ENCODE measurements at regions of chr19 and their contacts with region 1.

Region 1: DNA sequence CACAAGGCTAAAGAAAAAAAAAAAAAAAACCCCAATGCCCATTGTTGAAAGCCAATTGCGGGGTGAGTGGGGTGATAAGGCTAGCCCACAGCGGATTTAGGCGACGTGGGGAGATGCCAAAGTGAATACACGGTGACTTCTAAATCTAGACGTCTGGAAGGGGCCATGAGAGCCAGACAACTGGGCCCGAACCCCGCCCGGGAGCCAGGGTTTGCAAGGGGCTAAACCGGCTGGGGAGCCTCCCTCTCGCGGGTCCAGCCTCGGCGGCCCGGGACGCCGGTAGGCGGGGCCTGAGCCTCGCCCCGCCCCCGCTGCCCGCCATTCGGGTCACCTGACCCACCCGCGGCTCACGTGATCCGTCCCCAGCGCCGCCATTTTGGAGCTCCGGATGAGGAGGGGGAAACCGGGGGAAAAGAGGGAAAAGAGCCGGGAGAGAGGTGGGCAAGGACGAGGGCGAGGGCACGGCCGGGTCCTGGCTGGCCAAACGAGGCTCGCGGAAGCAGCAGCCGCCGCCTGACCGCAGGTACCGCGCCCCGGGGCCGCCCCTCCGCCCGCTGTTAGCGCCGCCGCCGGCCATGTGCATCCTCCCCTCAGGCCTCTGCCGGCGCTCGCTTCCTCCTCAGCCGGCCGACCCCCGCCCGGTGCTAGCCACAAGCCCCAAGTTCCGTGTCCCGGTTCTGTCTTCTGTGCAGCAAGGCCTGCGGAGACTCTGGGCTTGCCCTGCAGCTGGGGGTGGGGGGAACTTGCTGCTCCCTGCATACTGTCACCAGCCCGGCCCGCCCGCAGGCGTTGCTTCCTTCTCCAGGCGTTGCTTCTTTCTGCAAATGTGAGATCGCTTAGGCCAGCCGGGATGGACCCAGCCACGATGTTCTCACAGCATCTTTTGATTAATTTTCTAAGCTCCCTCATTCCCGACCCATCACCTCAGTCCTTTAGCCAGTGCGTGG is at the start of gene ZNF507:
- DNase-seq: peak; percentile 91
- H3K4me3 ChIP-seq: peak within 1 kb of the TSS; percentile 72
- H3K27ac ChIP-seq: peak within 1 kb of the TSS; percentile 71
- H3K4me1 ChIP-seq: peaks cover 13% of the 10 kb centered on the region
- H3K27me3 ChIP-seq: no peaks in the 10 kb centered on the region
- CTCF ChIP-seq: no peak
- total RNA-seq, gene ZNF507: 35.0 and 36.1 TPM in 2 replicates

Region 2: GRCh38 chr19:32309711-32310390 is 35.7 kb before region 1 on chr19:
- CTCF ChIA-PET with region 1: no interaction called
- POLR2A ChIA-PET with region 1: no interaction called
- intact Hi-C with region 1: no loop called
- DNase-seq: no peak
- H3K4me3 ChIP-seq: no peak overlapping the region
- H3K27ac ChIP-seq: no peak overlapping the region
- H3K4me1 ChIP-seq: peaks cover 15% of the 10 kb centered on the region
- H3K27me3 ChIP-seq: no peaks in the 10 kb centered on the region
- CTCF ChIP-seq: no peak

Region 3: DNA sequence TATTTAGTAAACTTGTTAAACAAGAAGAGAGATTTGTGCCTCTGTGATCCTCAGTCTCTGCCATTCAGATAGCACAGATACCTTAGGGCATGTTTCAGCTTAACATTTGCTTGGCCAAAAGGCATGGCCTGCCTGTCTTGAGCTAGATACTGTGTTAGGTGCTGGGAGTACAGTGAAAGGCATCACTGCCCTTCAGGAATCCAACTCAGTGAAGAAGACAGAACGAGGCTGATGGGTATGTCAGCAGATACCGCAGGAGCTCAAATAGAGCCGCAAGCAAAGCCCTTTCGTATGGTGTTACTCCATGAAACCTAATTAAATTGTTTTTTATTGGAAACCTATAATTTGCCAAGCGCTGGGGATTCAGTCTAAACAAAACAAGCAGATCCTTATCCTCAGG is 12.8 kb after region 1 on chr19:
- CTCF ChIA-PET with region 1: interaction called, 16 read pairs
- POLR2A ChIA-PET with region 1: no interaction called
- intact Hi-C with region 1: no loop called
- DNase-seq: no peak
- H3K4me3 ChIP-seq: no peak overlapping the region
- H3K27ac ChIP-seq: no peak overlapping the region
- H3K4me1 ChIP-seq: peaks cover 9% of the 10 kb centered on the region
- H3K27me3 ChIP-seq: no peaks in the 10 kb centered on the region
- CTCF ChIP-seq: no peak

Region 4: DNA sequence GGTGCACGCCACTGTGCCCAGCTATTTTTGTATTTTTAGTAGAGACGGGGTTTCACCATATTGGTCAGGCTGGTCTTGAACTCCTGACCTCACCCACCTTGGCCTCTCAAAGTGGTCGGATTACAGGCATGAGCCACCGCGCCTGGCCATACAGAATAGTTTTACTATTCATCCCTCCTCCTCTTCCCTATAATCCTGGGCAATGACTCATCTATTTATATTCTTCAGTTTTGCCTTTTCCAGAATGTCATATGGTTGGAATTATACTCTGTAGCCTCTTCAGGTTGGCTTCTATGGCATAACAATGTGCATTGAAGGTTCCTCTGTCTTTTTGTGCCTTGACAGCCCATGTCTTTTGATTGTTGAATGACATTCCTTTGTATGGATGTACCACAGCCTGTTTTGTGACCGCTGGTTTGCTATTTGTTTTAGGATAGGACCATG is 826.4 kb after region 1 on chr19:
- CTCF ChIA-PET with region 1: no interaction called
- POLR2A ChIA-PET with region 1: no interaction called
- intact Hi-C with region 1: no loop called
- DNase-seq: no peak
- H3K4me3 ChIP-seq: no peak overlapping the region
- H3K27ac ChIP-seq: no peak overlapping the region
- H3K4me1 ChIP-seq: no peaks in the 10 kb centered on the region
- H3K27me3 ChIP-seq: no peaks in the 10 kb centered on the region
- CTCF ChIP-seq: no peak

Measured in A673 (cell line).